WTC11 (cell line): ENCODE measurements at regions of chr20 and their contacts with region 1.

Region 1: GRCh38 chr20:36847009-36847709 is 28.8 kb upstream of the TLDC2 start:
- DNase-seq: no peak
- ATAC-seq: no peak
- H3K4me3 Mint-ChIP-seq: no peak overlapping the region
- H3K27ac Mint-ChIP-seq: peak overlapping the region; percentile 24; the same call in 1 of the 2 replicates
- H3K4me1 Mint-ChIP-seq: peaks cover 15% of the 10 kb centered on the region
- H3K27me3 Mint-ChIP-seq: no peaks in the 10 kb centered on the region
- CTCF ChIP-seq: no peak

Region 2: DNA sequence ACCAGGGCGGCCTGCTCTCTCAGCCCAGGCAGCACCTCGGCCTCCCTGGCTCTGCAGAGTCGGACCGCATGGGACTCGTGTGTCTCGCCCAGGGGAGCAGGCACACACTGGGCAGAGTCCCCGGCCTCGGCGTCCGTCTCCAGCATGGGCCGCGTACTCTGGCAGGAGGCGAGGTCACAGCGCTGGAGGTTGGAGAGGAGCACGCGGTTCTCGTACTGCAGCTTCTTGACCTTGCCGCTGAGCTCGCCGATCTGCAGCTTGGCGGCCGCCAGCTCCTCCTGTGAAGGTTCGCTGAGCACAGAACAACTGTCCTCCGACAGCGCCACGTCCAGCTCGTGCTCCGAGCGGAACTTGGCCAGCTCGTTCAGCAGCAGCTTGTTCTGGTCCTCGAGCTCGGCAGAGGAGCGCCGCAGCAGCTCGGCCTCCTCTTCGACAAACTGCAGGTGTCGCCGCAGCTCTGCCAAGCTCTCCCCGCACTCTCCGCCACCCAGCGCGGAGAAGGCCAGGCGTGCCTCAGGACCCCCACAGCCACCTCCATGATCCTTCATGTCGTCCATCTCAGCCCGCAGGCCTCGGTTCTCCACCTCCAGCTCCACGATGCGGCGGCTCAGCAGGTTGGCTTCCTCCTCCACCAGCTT is 31.6 kb before region 1 on chr20:
- CTCF ChIA-PET with region 1: interaction called, 11 read pairs
- POLR2A ChIA-PET with region 1: interaction called, 3 read pairs
- DNase-seq: peak; percentile 43
- ATAC-seq: peak; percentile 57
- H3K4me3 Mint-ChIP-seq: no peak overlapping the region
- H3K27ac Mint-ChIP-seq: peak overlapping the region; percentile 11; the same call in 1 of the 2 replicates
- H3K4me1 Mint-ChIP-seq: peaks cover 22% of the 10 kb centered on the region
- H3K27me3 Mint-ChIP-seq: no peaks in the 10 kb centered on the region
- CTCF ChIP-seq: no peak